Astrocyte of the cerebellum (primary cell): ENCODE measurements at regions of chr1 and their contacts with region 1.

Region 1: DNA sequence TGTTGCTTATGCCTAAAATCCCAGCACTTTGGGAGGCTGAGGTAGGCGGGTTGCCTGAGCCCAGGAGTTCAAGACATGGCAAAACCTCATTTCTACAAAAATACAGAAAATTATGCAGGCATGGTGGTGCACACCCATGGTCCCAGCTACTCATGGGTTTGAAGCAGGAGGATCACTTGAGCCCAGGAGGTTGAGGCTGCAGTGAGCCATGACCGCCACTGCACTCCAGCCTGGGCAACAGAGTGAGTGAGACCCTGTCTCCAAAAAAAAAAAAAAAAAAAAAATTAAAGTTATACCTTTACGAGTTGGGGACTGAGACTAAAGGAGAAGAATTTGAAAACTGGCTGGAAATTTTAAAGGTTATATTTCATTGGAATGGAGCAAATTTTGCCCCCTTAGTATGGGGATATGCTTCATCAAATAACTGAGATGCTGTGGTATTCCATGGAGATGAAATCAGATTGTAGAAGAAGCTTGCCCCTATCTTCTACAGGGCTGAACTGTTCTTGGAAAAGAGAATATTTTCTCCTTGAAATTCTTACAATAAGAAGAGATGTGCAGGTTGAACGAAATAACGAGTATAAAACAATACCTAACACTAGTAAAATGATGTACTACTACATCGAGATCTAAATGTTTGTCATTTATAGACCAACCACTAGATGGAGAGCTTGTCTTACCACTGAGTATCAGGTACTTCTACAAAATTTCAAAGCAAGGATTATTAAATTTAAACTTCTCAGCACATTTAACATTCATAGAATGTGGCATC is 34.9 kb upstream of the SCYL3 start:
- DNase-seq: peak; percentile 49
- H3K4me3 ChIP-seq: no peak overlapping the region
- CTCF ChIP-seq: peak; percentile 33

Region 2: GRCh38 chr1:169753552-169753951 is 175.1 kb before region 1 on chr1:
- in situ Hi-C with region 1: no loop called
- DNase-seq: no peak
- H3K4me3 ChIP-seq: no peak overlapping the region
- CTCF ChIP-seq: no peak

Region 3: GRCh38 chr1:169858467-169858866 is 70.2 kb before region 1 on chr1:
- in situ Hi-C with region 1: no loop called
- DNase-seq: peak; percentile 8
- H3K4me3 ChIP-seq: no peak overlapping the region
- CTCF ChIP-seq: no peak

Region 4: GRCh38 chr1:169989246-169989645 is 60.6 kb after region 1 on chr1:
- in situ Hi-C with region 1: loop called (anchors 5 kb)
- DNase-seq: no peak
- H3K4me3 ChIP-seq: no peak overlapping the region
- CTCF ChIP-seq: no peak

Region 5: GRCh38 chr1:170664828-170665612 is 736.4 kb after region 1 on chr1:
- in situ Hi-C with region 1: loop called (anchors 25 kb)
- DNase-seq: no peak
- H3K4me3 ChIP-seq: peak overlapping the region; percentile 85
- CTCF ChIP-seq: no peak